Activated CD4-positive, alpha-beta T cell treated with anti-CD3 and anti-CD28 coated beads for 36 hours (primary cell): ENCODE measurements at regions of chr6 and their contacts with region 1.

Region 1: DNA sequence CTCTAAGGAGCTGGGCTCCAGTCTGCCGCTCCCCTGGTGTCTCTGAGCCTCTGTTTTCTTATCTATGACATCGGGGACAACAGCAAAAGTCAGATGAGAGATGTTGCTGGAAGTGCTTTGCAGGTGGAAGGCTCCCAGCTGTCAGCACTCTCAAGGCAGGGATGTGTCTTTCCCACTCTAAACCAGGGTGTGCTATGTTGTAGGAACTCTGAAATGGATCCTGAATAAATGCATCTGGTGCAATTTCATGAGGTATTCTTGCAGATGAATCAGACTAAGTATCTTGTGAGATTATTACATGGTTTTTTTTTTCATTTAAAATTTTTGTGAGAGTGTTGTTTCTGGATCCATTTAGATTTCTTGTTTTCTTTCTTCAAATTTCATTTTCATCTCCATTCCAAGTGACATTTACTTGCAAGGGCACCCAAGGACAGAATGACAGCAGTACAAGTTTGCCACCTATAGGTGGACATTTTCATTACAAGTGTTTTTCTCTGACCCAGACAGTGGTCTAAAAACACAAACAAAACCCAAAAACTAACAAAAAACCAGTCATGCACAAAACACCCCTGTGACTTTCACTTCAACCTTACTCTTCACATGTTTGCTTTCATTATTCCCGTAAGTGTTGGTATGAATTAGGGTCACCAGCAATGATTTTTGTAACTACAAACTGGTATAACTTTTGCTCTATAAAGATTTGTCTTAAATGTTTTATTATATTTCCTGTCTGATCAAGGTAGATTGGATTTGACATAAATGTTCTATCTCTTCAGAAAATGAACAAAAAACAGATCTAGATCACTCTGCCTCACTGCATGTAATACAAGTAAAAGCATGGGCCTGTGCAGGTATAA is 14.7 kb upstream of the SIM1 start:
- DNase-seq: no peak
- ATAC-seq: peak; percentile 53
- H3K4me3 Mint-ChIP-seq: no peak overlapping the region
- H3K27ac Mint-ChIP-seq: no peak overlapping the region
- H3K4me1 Mint-ChIP-seq: no peaks in the 10 kb centered on the region
- H3K27me3 Mint-ChIP-seq: peaks cover 23% of the 10 kb centered on the region

Region 2: GRCh38 chr6:100001915-100002388 is 477.5 kb before region 1 on chr6:
- CTCF ChIA-PET with region 1: interaction called, 4 read pairs
- POLR2A ChIA-PET with region 1: no interaction called
- intact Hi-C with region 1: loop called (anchors 1 to 2 kb)
- DNase-seq: peak; percentile 55
- ATAC-seq: peak; percentile 61
- H3K4me3 Mint-ChIP-seq: no peak overlapping the region
- H3K27ac Mint-ChIP-seq: no peak overlapping the region
- H3K4me1 Mint-ChIP-seq: no peaks in the 10 kb centered on the region
- H3K27me3 Mint-ChIP-seq: peaks cover 15% of the 10 kb centered on the region

Region 3: DNA sequence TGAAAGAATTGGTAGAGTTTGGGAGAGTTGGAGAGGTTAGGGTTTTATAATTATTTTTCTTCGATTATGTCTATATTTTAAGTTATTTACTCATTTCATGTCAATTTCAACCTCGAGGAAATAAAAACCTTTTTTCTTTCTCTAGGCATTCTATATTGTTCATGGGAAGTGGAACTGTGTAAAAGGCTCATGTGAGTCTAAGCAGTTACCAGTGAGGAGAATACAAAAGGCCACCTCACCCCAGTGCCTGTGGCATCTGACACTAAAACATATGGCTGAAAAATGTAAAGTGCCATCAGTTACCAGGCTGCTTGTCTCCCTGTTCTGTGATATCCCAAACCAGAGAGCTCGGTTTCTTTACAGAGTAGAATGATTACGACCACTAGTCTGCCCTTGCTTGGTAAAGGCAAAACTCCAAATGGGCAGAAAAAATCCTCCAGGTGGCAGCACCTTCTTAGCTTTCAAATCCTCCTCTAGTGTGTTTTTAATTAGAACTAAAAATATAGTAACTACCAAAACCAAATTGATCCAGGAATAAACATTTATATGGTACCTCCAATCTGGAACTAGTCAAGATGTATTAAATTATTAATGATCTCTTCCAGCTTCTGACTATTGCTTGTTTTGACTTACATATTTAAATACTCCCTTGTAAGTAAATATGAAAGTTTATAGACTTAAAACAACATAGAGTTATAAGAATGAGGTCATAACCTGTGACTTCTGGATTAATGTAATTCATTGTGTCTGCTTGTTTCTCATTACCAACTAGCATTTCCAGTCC is 362.8 kb before region 1 on chr6:
- CTCF ChIA-PET with region 1: interaction called, 9 read pairs
- POLR2A ChIA-PET with region 1: no interaction called
- intact Hi-C with region 1: loop called (anchors 1 kb)
- DNase-seq: peak; percentile 45
- ATAC-seq: no peak
- H3K4me3 Mint-ChIP-seq: no peak overlapping the region
- H3K27ac Mint-ChIP-seq: no peak overlapping the region
- H3K4me1 Mint-ChIP-seq: no peaks in the 10 kb centered on the region
- H3K27me3 Mint-ChIP-seq: peaks cover 6% of the 10 kb centered on the region

Region 4: GRCh38 chr6:100209323-100210136 is 269.9 kb before region 1 on chr6:
- CTCF ChIA-PET with region 1: no interaction called
- POLR2A ChIA-PET with region 1: no interaction called
- intact Hi-C with region 1: no loop called
- DNase-seq: no peak
- ATAC-seq: no peak
- H3K4me3 Mint-ChIP-seq: no peak overlapping the region
- H3K27ac Mint-ChIP-seq: no peak overlapping the region
- H3K4me1 Mint-ChIP-seq: no peaks in the 10 kb centered on the region
- H3K27me3 Mint-ChIP-seq: peaks cover 2% of the 10 kb centered on the region

Region 5: DNA sequence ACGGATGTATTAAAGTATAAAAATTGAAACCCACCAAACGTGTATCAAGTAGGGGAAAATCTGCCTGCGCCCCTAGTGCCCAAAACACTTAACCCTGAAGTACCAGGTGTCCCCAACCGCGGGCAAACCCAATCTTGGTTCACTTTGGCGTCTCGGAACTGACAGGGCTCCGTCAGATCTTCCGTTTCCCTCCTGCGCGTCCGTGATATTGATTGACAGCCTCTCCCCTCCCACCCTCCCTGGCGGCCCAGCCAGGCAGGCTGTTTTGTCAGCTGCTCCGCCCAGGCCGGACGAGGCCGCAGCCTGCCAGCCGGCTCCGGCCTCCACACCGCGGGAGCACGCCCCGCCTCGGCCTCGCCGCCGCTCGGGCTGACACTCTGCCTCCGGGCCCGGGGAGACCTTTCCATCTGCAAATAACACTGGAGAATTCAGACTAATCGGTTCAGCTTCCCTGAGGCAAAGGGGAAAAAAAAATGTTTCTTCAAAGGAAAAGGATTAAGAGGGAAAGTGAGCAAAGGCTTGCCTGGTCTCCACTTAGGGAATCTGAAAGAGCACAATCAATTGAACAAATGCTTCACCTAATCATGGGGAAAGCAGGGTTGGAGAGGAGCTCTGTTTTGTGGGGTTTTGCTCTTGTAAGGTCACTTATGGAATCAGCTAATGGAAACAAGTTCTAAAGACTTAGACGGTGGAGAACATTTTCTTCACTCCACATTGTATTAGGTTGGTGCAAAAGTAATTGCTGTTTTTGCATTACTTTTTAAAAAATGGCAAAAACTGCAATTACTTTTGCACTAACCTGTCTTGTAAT is 250.4 kb before region 1 on chr6:
- CTCF ChIA-PET with region 1: no interaction called
- POLR2A ChIA-PET with region 1: no interaction called
- intact Hi-C with region 1: loop called in 1 of 2 experiments (anchors 10 kb)
- DNase-seq: peak; percentile 72
- ATAC-seq: peak; percentile 83
- H3K4me3 Mint-ChIP-seq: peak overlapping the region; percentile 51
- H3K27ac Mint-ChIP-seq: peak overlapping the region; percentile 63
- H3K4me1 Mint-ChIP-seq: peaks cover 11% of the 10 kb centered on the region
- H3K27me3 Mint-ChIP-seq: peaks cover 23% of the 10 kb centered on the region

Region 6: DNA sequence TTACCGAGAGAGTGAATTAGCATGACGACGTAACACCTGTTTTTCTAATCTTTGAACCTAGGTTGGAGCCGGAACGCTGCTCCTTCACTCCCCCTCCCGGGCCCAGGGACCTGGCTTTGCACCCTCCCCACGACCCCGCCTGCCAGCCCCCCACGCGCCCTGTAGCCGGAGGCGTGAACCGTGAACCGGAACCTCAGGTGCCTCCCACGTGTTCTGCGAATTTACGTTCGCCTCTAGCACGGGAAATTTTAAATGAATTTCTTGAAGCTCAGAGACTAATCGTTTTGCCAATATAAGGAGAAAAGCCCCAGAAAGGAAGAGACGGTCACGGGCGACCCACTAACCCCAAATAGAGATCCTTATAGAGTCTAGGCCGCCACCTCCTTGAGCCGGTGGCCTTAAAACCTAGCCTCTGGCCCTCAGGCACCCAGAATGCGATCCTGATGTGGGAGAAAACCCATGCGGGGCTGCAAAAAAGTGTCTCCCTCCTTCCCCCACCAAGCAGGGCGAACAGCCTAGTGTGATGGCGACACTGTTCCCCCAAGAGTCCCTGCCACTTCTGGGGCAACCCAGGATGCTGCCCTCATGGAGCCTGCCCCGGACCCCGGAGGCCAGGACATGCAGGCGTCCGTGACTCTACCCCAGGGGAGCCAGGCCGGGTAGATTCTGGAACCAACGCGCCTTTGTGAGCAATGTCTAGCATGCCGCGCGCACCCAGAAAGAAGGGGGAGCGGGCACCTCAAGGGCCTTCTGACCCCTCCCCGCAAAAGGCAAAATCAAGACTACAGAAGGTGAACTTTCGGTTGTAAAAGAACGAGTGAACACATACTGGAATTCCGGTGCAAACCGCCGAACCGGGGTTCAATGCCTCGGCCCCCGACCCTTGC is 12.0 kb before region 1 on chr6:
- CTCF ChIA-PET with region 1: no interaction called
- POLR2A ChIA-PET with region 1: no interaction called
- intact Hi-C with region 1: no loop called
- DNase-seq: no peak
- ATAC-seq: no peak
- H3K4me3 Mint-ChIP-seq: no peak overlapping the region
- H3K27ac Mint-ChIP-seq: no peak overlapping the region
- H3K4me1 Mint-ChIP-seq: peaks cover 22% of the 10 kb centered on the region
- H3K27me3 Mint-ChIP-seq: peaks cover 79% of the 10 kb centered on the region

Region 7: GRCh38 chr6:100664274-100665040 is 185.1 kb after region 1 on chr6:
- CTCF ChIA-PET with region 1: no interaction called
- POLR2A ChIA-PET with region 1: no interaction called
- intact Hi-C with region 1: loop called in 1 of 2 experiments (anchors 5 kb)
- DNase-seq: no peak
- ATAC-seq: no peak
- H3K4me3 Mint-ChIP-seq: no peak overlapping the region
- H3K27ac Mint-ChIP-seq: no peak overlapping the region
- H3K4me1 Mint-ChIP-seq: peaks cover 11% of the 10 kb centered on the region
- H3K27me3 Mint-ChIP-seq: no peaks in the 10 kb centered on the region